ENCODE measurements at regions of chr11 and their contacts with region 1.

Region 1: DNA sequence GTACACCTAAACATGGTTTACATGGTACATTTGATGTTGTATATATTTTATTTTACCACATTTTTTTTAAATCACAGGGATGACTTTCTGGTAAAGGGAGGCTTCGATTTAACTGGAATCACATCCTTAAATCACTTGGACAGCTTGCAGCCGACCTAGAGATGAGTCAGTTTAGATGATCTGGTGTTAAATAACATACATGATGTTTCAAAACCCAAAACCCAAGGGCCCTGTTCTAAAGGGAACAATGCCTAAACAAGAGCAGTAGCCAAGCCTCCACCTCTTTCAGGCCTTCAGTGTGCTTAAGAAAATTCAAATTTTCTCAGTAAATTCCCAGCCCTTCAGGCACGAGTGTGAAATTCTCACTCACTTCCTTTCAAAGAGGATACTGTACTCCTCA is 108.8 kb downstream of the WT1 start:
- DNase-seq: no peak
- H3K4me3 ChIP-seq: no peak overlapping the region
- H3K27ac ChIP-seq: no peak overlapping the region
- H3K4me1 ChIP-seq: no peaks in the 10 kb centered on the region
- H3K27me3 ChIP-seq: no peaks in the 10 kb centered on the region
- CTCF ChIP-seq: no peak

Region 2: GRCh38 chr11:32006799-32007388 is 319.6 kb before region 1 on chr11:
- CTCF ChIA-PET with region 1: interaction called, 19 read pairs
- POLR2A ChIA-PET with region 1: no interaction called
- intact Hi-C with region 1: no loop called
- DNase-seq: peak; percentile 25 to 45
- H3K4me3 ChIP-seq: no peak overlapping the region
- H3K27ac ChIP-seq: no peak overlapping the region
- H3K4me1 ChIP-seq: no peaks in the 10 kb centered on the region
- H3K27me3 ChIP-seq: peaks cover 30% of the 10 kb centered on the region
- CTCF ChIP-seq: peak; percentile 82

Region 3: GRCh38 chr11:32487270-32487669 is 160.7 kb after region 1 on chr11:
- CTCF ChIA-PET with region 1: no interaction called
- POLR2A ChIA-PET with region 1: no interaction called
- intact Hi-C with region 1: no loop called
- DNase-seq: peak; percentile 2 to 26
- H3K4me3 ChIP-seq: no peak overlapping the region
- H3K27ac ChIP-seq: no peak overlapping the region
- H3K4me1 ChIP-seq: no peaks in the 10 kb centered on the region
- H3K27me3 ChIP-seq: peaks cover 3% of the 10 kb centered on the region; the same call in 1 of the 2 replicates
- CTCF ChIP-seq: peak; percentile 50; the same call in 1 of the 2 replicates

Region 4: GRCh38 chr11:32643526-32643925 is 317.0 kb after region 1 on chr11:
- CTCF ChIA-PET with region 1: interaction called, 14 read pairs
- POLR2A ChIA-PET with region 1: no interaction called
- intact Hi-C with region 1: no loop called
- DNase-seq: no peak
- H3K4me3 ChIP-seq: no peak overlapping the region
- H3K27ac ChIP-seq: peak overlapping the region; percentile 2; the same call in 1 of the 2 replicates
- H3K4me1 ChIP-seq: no peaks in the 10 kb centered on the region
- H3K27me3 ChIP-seq: no peaks in the 10 kb centered on the region
- CTCF ChIP-seq: no peak

Region 5: GRCh38 chr11:32713496-32713895 is 387.0 kb after region 1 on chr11:
- CTCF ChIA-PET with region 1: no interaction called
- POLR2A ChIA-PET with region 1: no interaction called
- intact Hi-C with region 1: loop called (anchors 2 kb)
- DNase-seq: peak in 1 of 2 experiments; percentile 11
- H3K4me3 ChIP-seq: no peak overlapping the region
- H3K27ac ChIP-seq: no peak overlapping the region
- H3K4me1 ChIP-seq: peaks cover 4% of the 10 kb centered on the region
- H3K27me3 ChIP-seq: no peaks in the 10 kb centered on the region
- CTCF ChIP-seq: peak; percentile 80

Region 6: DNA sequence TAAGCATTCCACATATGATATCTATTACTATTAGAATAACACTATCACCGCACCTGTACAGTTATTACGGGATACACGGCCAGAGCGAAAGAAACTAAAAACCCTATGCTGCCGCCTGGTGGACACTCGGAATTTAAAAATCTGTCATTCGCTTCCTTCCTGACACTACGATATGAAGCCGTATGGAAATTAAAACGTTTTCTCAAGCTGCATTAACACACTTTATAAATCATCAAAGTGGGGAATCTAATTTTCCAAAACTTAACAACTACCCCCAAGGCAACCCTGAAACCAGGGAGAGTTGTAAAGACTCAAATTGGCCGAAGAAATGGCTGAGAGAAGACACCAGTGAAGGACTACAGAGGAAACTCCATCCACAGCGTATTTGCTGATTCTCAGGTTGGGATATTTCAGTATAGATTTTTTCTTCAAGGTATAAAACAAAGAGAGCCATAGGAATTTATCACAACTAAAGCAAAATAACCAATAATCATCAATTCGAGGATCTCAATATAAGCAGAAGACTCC is 466.5 kb after region 1 on chr11:
- CTCF ChIA-PET with region 1: no interaction called
- POLR2A ChIA-PET with region 1: no interaction called
- intact Hi-C with region 1: loop called (anchors 1 kb)
- DNase-seq: peak in 1 of 2 experiments; percentile 62
- H3K4me3 ChIP-seq: peak overlapping the region; percentile 39; the same call in 1 of the 2 replicates
- H3K27ac ChIP-seq: no peak overlapping the region
- H3K4me1 ChIP-seq: no peaks in the 10 kb centered on the region
- H3K27me3 ChIP-seq: no peaks in the 10 kb centered on the region
- CTCF ChIP-seq: peak; percentile 95

Region 7: DNA sequence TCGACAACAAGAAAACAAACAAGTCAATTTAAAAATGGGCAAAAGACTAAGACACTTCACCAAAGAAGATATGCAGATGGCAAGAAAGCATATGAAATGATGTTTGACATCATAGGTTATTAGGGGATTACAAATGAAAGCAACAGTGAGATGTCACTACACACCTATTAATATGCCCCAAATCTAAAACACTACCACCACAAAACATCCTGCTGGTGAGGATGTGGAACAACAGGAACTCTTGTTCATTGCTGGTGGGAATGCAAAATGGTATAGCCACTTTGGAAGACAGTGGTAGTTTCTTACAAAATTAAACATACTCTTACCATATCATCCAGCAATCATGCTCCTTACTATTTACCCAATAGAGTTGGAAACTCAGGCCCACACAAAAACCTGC is 532.2 kb after region 1 on chr11:
- CTCF ChIA-PET with region 1: interaction called, 13 read pairs
- POLR2A ChIA-PET with region 1: no interaction called
- intact Hi-C with region 1: no loop called
- DNase-seq: no peak
- H3K4me3 ChIP-seq: no peak overlapping the region
- H3K27ac ChIP-seq: no peak overlapping the region
- H3K4me1 ChIP-seq: no peaks in the 10 kb centered on the region
- H3K27me3 ChIP-seq: no peaks in the 10 kb centered on the region
- CTCF ChIP-seq: peak; percentile 38; the same call in 1 of the 2 replicates

Region 8: GRCh38 chr11:33362051-33362910 is 1035.8 kb after region 1 on chr11:
- CTCF ChIA-PET with region 1: no interaction called
- POLR2A ChIA-PET with region 1: no interaction called
- intact Hi-C with region 1: loop called (anchors 10 kb)
- DNase-seq: peak in 1 of 2 experiments; percentile 54
- H3K4me3 ChIP-seq: no peak overlapping the region
- H3K27ac ChIP-seq: no peak overlapping the region
- H3K4me1 ChIP-seq: no peaks in the 10 kb centered on the region
- H3K27me3 ChIP-seq: no peaks in the 10 kb centered on the region
- CTCF ChIP-seq: peak; percentile 91